ENCODE measurements at regions of chr2 and their contacts with region 1.

Region 1: GRCh38 chr2:96739633-96740428 is at the start of gene LMAN2L:
- DNase-seq: peak; percentile 98
- H3K4me3 ChIP-seq: peak within 1 kb of the TSS; percentile 83
- H3K27ac ChIP-seq: peak within 1 kb of the TSS; percentile 70
- H3K4me1 ChIP-seq: peaks cover 29% of the 10 kb centered on the region
- CTCF ChIP-seq: no peak
- total RNA-seq, gene LMAN2L: 12.9 and 15.5 TPM in 2 replicates

Region 2: DNA sequence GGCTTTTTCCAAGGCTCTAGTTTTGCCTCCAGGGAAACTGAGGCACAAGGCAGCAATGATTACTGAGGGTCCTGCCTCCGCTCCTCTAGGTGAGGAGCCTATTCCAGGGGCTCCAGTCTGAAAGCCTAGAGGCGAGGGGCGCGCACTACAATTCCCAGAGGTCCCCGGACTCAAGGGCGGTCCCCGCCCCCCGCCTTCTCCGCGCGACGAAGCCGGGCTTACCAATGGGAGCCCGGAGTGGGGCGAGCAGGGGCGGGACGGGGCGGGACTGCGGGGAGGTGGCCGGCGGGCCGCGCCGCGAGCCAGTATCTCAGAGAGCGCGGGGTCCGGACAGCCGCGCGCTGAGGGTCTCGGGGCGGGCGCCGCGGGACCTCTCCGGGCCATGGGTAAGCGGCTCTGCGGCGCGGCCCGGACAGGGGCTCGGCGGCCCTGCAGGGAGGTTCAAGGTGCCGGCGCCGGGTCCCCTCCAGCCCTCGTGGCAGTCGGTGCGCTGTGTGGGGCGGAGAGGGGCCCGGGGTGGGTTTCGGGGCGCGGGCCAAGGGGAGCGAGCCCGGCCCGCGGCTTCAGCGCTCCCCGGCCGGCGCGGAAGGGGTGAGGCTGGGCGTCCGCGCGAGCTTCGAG is 203.3 kb before region 1 on chr2 and contains the start of gene ARID5A:
- CTCF ChIA-PET with region 1: no interaction called
- POLR2A ChIA-PET with region 1: no interaction called
- intact Hi-C with region 1: loop called (anchors 2 kb)
- DNase-seq: peak; percentile 94
- H3K4me3 ChIP-seq: peak within 1 kb of the TSS; percentile 76
- H3K27ac ChIP-seq: no peak within 1 kb of the TSS
- H3K4me1 ChIP-seq: peaks cover 13% of the 10 kb centered on the region
- CTCF ChIP-seq: no peak
- total RNA-seq, gene ARID5A: 4.4 and 6.0 TPM in 2 replicates

Region 3: GRCh38 chr2:96729748-96730147 is 10.1 kb before region 1 on chr2:
- CTCF ChIA-PET with region 1: no interaction called
- POLR2A ChIA-PET with region 1: no interaction called
- intact Hi-C with region 1: no loop called
- DNase-seq: no peak
- H3K4me3 ChIP-seq: no peak overlapping the region
- H3K27ac ChIP-seq: no peak overlapping the region
- H3K4me1 ChIP-seq: no peaks in the 10 kb centered on the region
- CTCF ChIP-seq: no peak